CD8-positive, alpha-beta T cell (primary cell): ENCODE measurements at regions of chr1 and their contacts with region 1.

Region 1: DNA sequence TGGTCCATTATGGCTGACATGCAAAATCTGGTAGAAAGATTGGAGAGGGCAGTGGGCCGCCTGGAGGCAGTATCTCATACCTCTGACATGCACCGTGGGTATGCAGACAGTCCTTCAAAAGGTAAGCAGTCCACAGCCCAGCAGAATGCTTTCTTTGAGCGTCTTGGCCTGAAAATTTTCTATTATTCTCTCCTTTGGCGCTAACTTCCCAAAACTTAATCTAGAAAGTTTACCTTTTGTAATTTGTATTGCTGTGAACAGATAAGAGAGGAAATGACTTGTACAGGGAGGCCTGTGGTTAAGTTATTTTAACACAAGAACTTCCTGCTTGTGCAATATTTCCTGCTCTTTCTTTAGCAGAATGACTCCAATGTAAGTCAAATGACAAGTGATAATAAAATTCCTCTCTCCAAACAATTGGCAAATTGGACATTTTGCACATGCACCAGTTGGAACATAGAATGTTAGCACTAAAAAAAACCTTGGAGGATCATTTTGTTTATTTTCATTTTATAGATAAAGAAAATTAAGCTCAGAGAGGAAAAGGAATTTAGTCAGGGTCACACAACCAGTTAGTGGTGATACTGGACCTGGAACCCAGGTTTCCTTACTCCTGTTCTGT is 18.9 kb downstream of the CAP1 start:
- DNase-seq: peak in 3 of 9 experiments; percentile 35 to 74 (median 50)
- ATAC-seq: peak; percentile 74
- H3K4me3 ChIP-seq: peak overlapping the region; percentile 18 to 24
- H3K4me3 Mint-ChIP-seq: peak overlapping the region; percentile 79
- H3K27ac ChIP-seq: peak overlapping the region; percentile 36 to 71
- H3K27ac Mint-ChIP-seq: peak overlapping the region; percentile 81
- H3K4me1 ChIP-seq: peaks cover 89% of the 10 kb centered on the region
- H3K4me1 Mint-ChIP-seq: peaks cover 92% of the 10 kb centered on the region
- H3K27me3 ChIP-seq: no peaks in the 10 kb centered on the region
- H3K27me3 Mint-ChIP-seq: no peaks in the 10 kb centered on the region
- CTCF ChIP-seq: no peak

Region 2: DNA sequence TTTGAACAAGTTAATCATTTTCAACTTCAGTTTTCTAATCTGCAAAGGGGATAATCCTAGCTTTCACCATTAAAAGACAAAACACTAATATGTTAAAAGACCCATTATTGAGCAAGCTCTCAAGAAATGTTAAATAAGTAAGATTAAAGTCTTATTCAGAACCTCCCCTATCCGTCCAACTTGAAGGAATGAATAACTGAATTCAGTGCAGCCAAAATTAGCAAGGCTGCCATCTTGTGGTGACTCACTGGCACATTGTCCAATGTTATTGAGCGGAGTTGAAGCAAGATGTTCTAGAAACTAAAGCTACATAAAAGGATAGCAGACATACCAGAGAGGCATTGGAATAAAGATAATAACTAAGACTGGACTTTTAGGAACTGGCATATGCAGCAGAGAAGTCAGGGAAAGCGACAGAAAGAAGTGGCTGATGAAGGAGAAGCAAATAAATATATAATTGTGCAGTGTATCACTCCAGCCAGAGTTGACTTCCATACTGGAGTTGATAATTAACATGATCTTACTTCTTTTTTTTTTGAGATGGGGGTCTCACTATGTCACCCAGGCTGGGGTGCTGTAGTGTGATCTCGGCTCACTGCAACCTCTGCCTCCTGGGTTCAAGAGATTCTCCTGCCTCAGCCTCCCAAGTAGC is 27.1 kb before region 1 on chr1:
- CTCF ChIA-PET with region 1: interaction called, 24 read pairs
- POLR2A ChIA-PET with region 1: interaction called, 3 read pairs
- intact Hi-C with region 1: no loop called
- DNase-seq: peak; percentile 15 to 77 (median 60)
- ATAC-seq: peak; percentile 67
- H3K4me3 ChIP-seq: no peak overlapping the region
- H3K4me3 Mint-ChIP-seq: no peak overlapping the region
- H3K27ac ChIP-seq: no peak overlapping the region
- H3K27ac Mint-ChIP-seq: peak overlapping the region; percentile 8
- H3K4me1 ChIP-seq: peaks cover 45% of the 10 kb centered on the region
- H3K4me1 Mint-ChIP-seq: peaks cover 49% of the 10 kb centered on the region
- H3K27me3 ChIP-seq: no peaks in the 10 kb centered on the region
- H3K27me3 Mint-ChIP-seq: no peaks in the 10 kb centered on the region
- CTCF ChIP-seq: peak; percentile 47

Region 3: GRCh38 chr1:40072142-40072541 is 12.7 kb after region 1 on chr1:
- CTCF ChIA-PET with region 1: interaction called, 6 read pairs
- POLR2A ChIA-PET with region 1: interaction called, 21 read pairs
- intact Hi-C with region 1: no loop called
- DNase-seq: no peak
- ATAC-seq: no peak
- H3K4me3 ChIP-seq: no peak overlapping the region
- H3K4me3 Mint-ChIP-seq: no peak overlapping the region
- H3K27ac ChIP-seq: peak overlapping the region in 1 of 2 experiments; percentile 17
- H3K27ac Mint-ChIP-seq: peak overlapping the region; percentile 79
- H3K4me1 ChIP-seq: peaks cover 7% of the 10 kb centered on the region
- H3K4me1 Mint-ChIP-seq: peaks cover 25% of the 10 kb centered on the region
- H3K27me3 ChIP-seq: no peaks in the 10 kb centered on the region
- H3K27me3 Mint-ChIP-seq: no peaks in the 10 kb centered on the region
- CTCF ChIP-seq: no peak

Region 4: DNA sequence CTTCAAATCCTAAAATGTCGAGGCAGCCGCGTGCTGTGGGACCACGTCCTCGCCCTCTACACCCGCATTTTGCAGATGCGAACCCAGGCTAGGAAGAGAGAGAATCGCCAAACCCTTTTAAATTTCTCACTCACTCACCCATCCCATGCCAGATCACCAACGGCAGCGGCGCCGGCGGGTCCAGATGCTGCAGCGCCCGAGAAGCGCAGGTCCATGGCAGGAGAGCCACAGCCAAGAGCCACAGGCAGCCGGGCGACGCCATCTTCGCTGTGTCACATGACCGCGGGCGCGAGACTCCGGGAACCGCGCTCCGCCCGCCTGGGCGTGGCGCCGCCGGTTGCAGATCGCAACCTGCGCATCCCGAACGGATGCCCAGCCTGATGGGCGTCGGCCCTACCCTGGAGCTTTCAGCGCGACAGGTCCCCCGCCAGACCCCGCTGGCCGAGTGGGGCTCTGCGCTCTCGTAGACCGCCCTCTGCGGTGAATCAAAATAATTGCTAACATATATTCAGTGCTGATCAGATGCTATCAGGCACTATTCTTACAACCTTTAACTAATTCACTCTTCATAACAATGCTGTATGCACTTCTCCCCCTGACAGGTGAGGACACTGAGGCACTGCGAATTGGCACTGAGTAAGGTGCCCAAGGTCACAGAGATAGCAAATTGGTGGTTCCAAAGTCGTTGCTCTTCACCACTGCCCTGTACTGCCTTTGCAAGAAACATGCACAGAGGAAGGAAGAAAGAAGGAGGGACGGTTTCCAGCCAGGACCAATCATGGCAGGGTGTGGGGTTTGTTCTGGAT is 37.7 kb after region 1 on chr1 and contains the start of gene PPT1:
- CTCF ChIA-PET with region 1: no interaction called
- POLR2A ChIA-PET with region 1: no interaction called
- intact Hi-C with region 1: loop called in 1 of 2 experiments (anchors 5 kb)
- DNase-seq: peak; percentile 58 to 90 (median 77)
- ATAC-seq: peak; percentile 83
- H3K4me3 ChIP-seq: peak within 1 kb of the TSS; percentile 55 to 57
- H3K4me3 Mint-ChIP-seq: peak within 1 kb of the TSS; percentile 91
- H3K27ac ChIP-seq: peak within 1 kb of the TSS; percentile 24 to 51
- H3K27ac Mint-ChIP-seq: peak within 1 kb of the TSS; percentile 94
- H3K4me1 ChIP-seq: peaks cover 23% of the 10 kb centered on the region
- H3K4me1 Mint-ChIP-seq: peaks cover 32% of the 10 kb centered on the region
- H3K27me3 ChIP-seq: peaks cover 0 to 4% of the 10 kb centered on the region in 2 experiments
- H3K27me3 Mint-ChIP-seq: no peaks in the 10 kb centered on the region
- CTCF ChIP-seq: peak; percentile 52
- total RNA-seq, gene PPT1: 32.2 to 34.2 TPM

Region 5: DNA sequence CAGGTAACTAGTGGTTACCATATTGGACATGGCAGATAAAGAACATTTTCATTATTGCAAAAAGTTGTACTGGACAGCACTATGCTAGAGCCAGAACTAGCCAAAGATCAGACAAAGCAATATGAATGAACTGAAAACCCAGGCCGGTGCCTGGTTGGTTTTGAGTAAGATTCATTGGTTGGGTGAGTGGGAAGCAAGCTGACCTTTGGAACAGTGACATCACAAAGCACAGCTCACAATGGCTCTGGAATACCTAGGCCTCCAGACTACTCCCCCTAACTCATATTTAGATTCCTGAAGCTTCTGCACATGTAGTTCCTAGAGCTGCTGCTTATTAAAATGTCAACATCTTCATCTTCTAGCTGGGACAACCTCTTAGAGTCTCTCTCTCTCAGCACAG is 188.2 kb after region 1 on chr1 and contains the start of gene TMCO2:
- CTCF ChIA-PET with region 1: no interaction called
- POLR2A ChIA-PET with region 1: no interaction called
- intact Hi-C with region 1: no loop called
- DNase-seq: no peak
- ATAC-seq: no peak
- H3K4me3 ChIP-seq: no peak within 1 kb of the TSS
- H3K4me3 Mint-ChIP-seq: no peak within 1 kb of the TSS
- H3K27ac ChIP-seq: no peak within 1 kb of the TSS
- H3K27ac Mint-ChIP-seq: no peak within 1 kb of the TSS
- H3K4me1 ChIP-seq: no peaks in the 10 kb centered on the region
- H3K4me1 Mint-ChIP-seq: peaks cover 8% of the 10 kb centered on the region
- H3K27me3 ChIP-seq: no peaks in the 10 kb centered on the region
- H3K27me3 Mint-ChIP-seq: no peaks in the 10 kb centered on the region
- CTCF ChIP-seq: no peak
- total RNA-seq, gene TMCO2: not detected